Panc1 (cell line): ENCODE measurements at regions of chr17 and their contacts with region 1.

Region 1: GRCh38 chr17:74280093-74280513 is 6.1 kb downstream of the DNAI2 start:
- DNase-seq: no peak
- ATAC-seq: no peak
- H3K4me3 ChIP-seq: no peak overlapping the region
- H3K27ac ChIP-seq: no peak overlapping the region
- H3K4me1 ChIP-seq: no peaks in the 10 kb centered on the region; the same call in 1 of the 2 replicates
- H3K27me3 ChIP-seq: no peaks in the 10 kb centered on the region
- CTCF ChIP-seq: no peak

Region 2: DNA sequence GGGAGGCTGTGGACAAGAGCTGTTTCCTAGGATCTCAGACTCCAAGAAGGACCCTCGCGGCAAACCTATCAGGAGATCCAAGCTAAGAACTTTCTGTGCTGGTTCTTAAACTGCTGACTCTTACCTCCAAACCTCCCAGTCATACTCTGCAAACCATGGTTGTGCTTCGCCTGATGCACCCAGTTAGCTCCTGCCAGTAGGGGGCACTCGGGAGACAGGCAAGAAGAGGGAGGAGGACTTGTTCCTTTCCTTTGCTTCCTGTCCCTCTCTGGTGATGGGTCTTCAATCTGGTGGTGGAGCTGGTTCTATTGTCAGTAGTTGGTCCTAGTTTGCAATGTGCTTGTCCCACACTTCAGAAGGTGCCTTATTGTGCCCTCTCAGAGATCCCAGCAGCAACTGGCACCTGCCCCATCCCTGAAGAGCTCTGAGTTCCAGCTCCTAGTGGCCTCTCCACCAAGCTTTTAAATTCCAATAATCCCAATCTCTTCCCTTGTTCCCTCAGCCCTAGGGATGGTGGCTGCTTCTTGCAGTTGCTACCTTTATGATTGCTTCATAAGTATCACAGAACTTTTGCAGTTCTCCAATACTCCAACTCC is 190.1 kb before region 1 on chr17:
- CTCF ChIA-PET with region 1: no interaction called
- POLR2A ChIA-PET with region 1: no interaction called
- in situ Hi-C with region 1: no loop called
- intact Hi-C with region 1: no loop called
- DNase-seq: peak; percentile 35
- ATAC-seq: peak; percentile 79
- H3K4me3 ChIP-seq: no peak overlapping the region
- H3K27ac ChIP-seq: no peak overlapping the region
- H3K4me1 ChIP-seq: no peaks in the 10 kb centered on the region
- H3K27me3 ChIP-seq: peaks cover 25% of the 10 kb centered on the region
- CTCF ChIP-seq: peak; percentile 89

Region 3: GRCh38 chr17:74231928-74232907 is 47.9 kb before region 1 on chr17:
- CTCF ChIA-PET with region 1: interaction called, 13 read pairs
- POLR2A ChIA-PET with region 1: no interaction called
- in situ Hi-C with region 1: no loop called
- intact Hi-C with region 1: no loop called
- DNase-seq: no peak
- ATAC-seq: no peak
- H3K4me3 ChIP-seq: no peak overlapping the region
- H3K27ac ChIP-seq: no peak overlapping the region
- H3K4me1 ChIP-seq: no peaks in the 10 kb centered on the region
- H3K27me3 ChIP-seq: no peaks in the 10 kb centered on the region
- CTCF ChIP-seq: no peak

Region 4: DNA sequence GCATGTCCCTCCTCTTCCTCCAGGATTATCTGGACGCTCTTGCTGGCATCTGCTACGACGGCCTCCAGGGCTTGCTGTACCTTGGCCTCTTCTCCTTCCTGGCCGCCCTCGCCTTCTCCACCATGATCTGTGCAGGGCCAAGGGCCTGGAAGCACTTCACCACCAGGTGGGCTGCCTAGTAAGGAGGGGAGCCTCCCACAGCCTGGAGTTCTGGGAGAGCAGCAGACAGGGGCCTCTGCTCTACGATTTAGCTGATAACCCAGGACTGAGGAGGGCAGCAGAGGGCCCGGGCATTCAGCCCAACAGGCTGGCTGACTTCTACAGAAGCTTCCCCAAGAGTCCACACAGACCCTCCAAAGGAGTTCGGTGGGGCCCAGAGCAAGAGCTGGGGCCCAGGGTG is 27.9 kb before region 1 on chr17:
- CTCF ChIA-PET with region 1: no interaction called
- POLR2A ChIA-PET with region 1: no interaction called
- in situ Hi-C with region 1: no loop called
- intact Hi-C with region 1: no loop called
- DNase-seq: no peak
- ATAC-seq: no peak
- H3K4me3 ChIP-seq: no peak overlapping the region
- H3K27ac ChIP-seq: no peak overlapping the region
- H3K4me1 ChIP-seq: no peaks in the 10 kb centered on the region
- H3K27me3 ChIP-seq: no peaks in the 10 kb centered on the region
- CTCF ChIP-seq: no peak

Region 5: GRCh38 chr17:74296548-74296936 is 16.4 kb after region 1 on chr17:
- CTCF ChIA-PET with region 1: interaction called, 15 read pairs
- POLR2A ChIA-PET with region 1: interaction called, 16 read pairs
- in situ Hi-C with region 1: no loop called
- intact Hi-C with region 1: no loop called
- DNase-seq: no peak
- ATAC-seq: peak; percentile 79
- H3K4me3 ChIP-seq: no peak overlapping the region
- H3K27ac ChIP-seq: no peak overlapping the region
- H3K4me1 ChIP-seq: peaks cover 4% of the 10 kb centered on the region; the same call in 1 of the 2 replicates
- H3K27me3 ChIP-seq: no peaks in the 10 kb centered on the region
- CTCF ChIP-seq: peak; percentile 82

Region 6: DNA sequence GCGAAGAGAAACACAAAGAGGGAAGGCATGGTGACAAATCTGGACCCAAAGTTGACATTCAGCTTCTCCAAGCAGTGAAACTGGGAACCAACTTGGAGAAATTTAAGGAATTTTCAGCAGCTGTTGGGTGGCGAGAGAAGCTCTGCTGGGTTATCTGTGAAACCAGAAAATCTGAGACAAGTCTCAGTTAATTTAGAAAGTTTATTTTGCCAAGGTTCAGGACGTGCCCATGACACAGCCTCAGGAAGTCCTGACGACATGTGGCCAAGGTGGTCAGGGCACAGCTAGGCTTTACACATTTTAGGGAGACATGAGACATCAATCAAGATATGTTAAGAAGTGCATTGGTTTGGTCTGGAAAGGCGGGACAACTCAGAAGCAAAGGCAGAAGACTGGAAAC is 443.8 kb after region 1 on chr17:
- CTCF ChIA-PET with region 1: no interaction called
- POLR2A ChIA-PET with region 1: interaction called, 14 read pairs
- in situ Hi-C with region 1: no loop called
- intact Hi-C with region 1: no loop called
- DNase-seq: no peak
- ATAC-seq: no peak
- H3K4me3 ChIP-seq: no peak overlapping the region
- H3K27ac ChIP-seq: no peak overlapping the region
- H3K4me1 ChIP-seq: no peaks in the 10 kb centered on the region
- H3K27me3 ChIP-seq: no peaks in the 10 kb centered on the region
- CTCF ChIP-seq: no peak